ENCODE measurements at regions of chr2 and their contacts with region 1.

Region 1: DNA sequence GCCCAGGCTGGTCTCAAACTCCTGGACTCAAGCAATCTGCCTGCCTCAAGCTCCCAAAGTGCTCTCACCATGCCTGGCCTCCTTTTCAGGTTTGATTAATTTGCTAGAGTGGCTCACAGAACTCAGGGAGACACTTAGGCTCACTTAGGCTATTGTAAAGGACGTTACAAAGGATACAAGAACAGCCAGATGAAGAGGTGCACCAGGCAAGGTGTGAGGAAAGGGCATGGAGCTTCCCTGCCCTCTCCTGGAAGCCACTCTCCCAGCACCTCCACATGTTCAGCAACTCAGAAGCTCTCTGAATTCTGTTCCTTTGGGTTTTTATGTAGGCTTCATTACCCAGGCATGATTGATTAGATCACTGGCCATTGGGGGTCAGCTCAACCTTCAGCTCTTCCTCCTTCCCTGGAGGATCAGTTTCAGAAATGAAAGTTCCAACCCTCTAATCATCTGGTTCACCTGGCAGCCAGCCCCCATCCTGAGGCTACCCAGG is 78.7 kb upstream of the RGPD5 start:
- DNase-seq: peak; percentile 68
- H3K4me3 Mint-ChIP-seq: no peak overlapping the region
- H3K27ac Mint-ChIP-seq: no peak overlapping the region
- H3K4me1 Mint-ChIP-seq: no peaks in the 10 kb centered on the region
- H3K27me3 Mint-ChIP-seq: no peaks in the 10 kb centered on the region
- CTCF ChIP-seq: peak; percentile 78

Region 2: DNA sequence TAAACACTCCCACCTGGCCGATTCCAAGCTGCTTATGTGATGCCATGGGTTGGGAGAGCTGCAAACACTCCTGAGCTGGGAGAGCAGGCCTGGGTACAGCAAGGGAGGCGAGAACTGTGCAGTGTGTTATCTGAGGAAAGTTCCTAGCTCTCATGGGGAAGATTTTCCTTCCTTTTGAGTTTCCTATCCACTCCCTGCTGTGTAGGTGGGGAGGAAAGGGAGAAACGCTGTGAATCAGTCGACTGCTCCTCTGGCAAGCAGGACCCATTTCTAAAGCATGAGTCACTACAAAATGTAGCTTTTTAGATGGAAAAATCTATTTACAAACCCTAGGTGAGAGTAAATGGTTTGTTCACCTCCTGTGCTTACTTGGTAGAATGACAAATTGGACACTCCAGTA is 505.9 kb before region 1 on chr2:
- CTCF ChIA-PET with region 1: no interaction called
- POLR2A ChIA-PET with region 1: no interaction called
- intact Hi-C with region 1: no loop called
- DNase-seq: peak; percentile 86
- H3K4me3 Mint-ChIP-seq: peak overlapping the region; percentile 26
- H3K27ac Mint-ChIP-seq: peak overlapping the region; percentile 17
- H3K4me1 Mint-ChIP-seq: peaks cover 58% of the 10 kb centered on the region
- H3K27me3 Mint-ChIP-seq: no peaks in the 10 kb centered on the region
- CTCF ChIP-seq: no peak

Region 3: GRCh38 chr2:109516445-109517117 is 198.8 kb before region 1 on chr2:
- CTCF ChIA-PET with region 1: interaction called, 3 read pairs
- POLR2A ChIA-PET with region 1: no interaction called
- intact Hi-C with region 1: loop called (anchors 1 kb)
- DNase-seq: peak; percentile 72
- H3K4me3 Mint-ChIP-seq: no peak overlapping the region
- H3K27ac Mint-ChIP-seq: no peak overlapping the region
- H3K4me1 Mint-ChIP-seq: peaks cover 17% of the 10 kb centered on the region
- H3K27me3 Mint-ChIP-seq: no peaks in the 10 kb centered on the region
- CTCF ChIP-seq: peak; percentile 83

Region 4: GRCh38 chr2:109702618-109702985 is 12.8 kb before region 1 on chr2:
- CTCF ChIA-PET with region 1: interaction called, 33 read pairs
- POLR2A ChIA-PET with region 1: interaction called, 19 read pairs
- intact Hi-C with region 1: no loop called
- DNase-seq: peak; percentile 89
- H3K4me3 Mint-ChIP-seq: peak overlapping the region; percentile 68
- H3K27ac Mint-ChIP-seq: peak overlapping the region; percentile 97
- H3K4me1 Mint-ChIP-seq: peaks cover 40% of the 10 kb centered on the region
- H3K27me3 Mint-ChIP-seq: no peaks in the 10 kb centered on the region
- CTCF ChIP-seq: no peak

Region 5: GRCh38 chr2:109736177-109736827 is 20.9 kb after region 1 on chr2:
- CTCF ChIA-PET with region 1: interaction called, 17 read pairs
- POLR2A ChIA-PET with region 1: interaction called, 5 read pairs
- intact Hi-C with region 1: no loop called
- DNase-seq: peak; percentile 70
- H3K4me3 Mint-ChIP-seq: no peak overlapping the region
- H3K27ac Mint-ChIP-seq: no peak overlapping the region
- H3K4me1 Mint-ChIP-seq: no peaks in the 10 kb centered on the region
- H3K27me3 Mint-ChIP-seq: no peaks in the 10 kb centered on the region
- CTCF ChIP-seq: peak; percentile 72

Measured in MCF 10A (cell line).